ENCODE measurements at regions of chr3 and their contacts with region 1.

Region 1: GRCh38 chr3:9986237-9986725 is 360 bp downstream of the EMC3 start:
- DNase-seq: no peak
- ATAC-seq: peak; percentile 28
- H3K4me3 Mint-ChIP-seq: peak overlapping the region; percentile 98
- H3K27ac Mint-ChIP-seq: peak overlapping the region; percentile 100
- H3K4me1 Mint-ChIP-seq: peaks cover 24% of the 10 kb centered on the region
- H3K27me3 Mint-ChIP-seq: no peaks in the 10 kb centered on the region
- CTCF ChIP-seq: no peak

Region 2: DNA sequence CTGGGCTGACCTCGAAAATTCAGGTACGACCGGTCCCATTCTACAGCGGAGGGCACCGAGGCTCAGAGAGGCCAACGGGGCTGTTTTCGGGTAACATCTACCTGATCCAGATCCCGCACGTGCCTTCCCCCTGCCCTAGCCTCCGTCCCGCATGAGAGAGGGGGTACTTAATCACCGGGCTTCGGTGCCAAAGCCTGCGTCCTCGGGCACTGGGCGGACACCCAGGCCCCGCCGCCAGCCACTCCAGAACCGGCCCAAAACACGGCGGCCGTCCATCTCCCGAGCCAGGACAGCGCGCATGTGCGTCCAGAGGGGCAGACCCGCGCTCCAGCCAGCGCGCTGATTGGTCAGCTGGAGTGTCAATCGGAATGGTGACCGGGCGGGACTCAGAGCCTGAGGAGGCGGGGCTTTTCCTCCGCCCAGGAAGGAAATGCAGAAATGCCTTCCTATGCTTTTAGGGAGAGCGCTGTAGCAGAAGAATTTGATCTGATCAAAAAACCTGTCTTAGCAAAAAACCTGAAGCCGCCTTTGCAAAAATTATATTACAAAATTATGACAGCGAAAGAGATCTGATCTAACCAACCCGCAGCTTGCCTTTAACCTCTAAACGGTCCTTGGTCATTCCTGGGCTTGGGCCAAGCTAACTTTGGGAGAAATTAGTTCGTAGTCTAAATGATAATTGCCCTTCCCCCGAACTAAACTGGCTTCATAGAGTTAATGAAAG is 142.4 kb before region 1 on chr3 and contains the start of gene RPUSD3:
- CTCF ChIA-PET with region 1: no interaction called
- POLR2A ChIA-PET with region 1: no interaction called
- intact Hi-C with region 1: loop called (anchors 2 kb)
- DNase-seq: peak; percentile 95
- ATAC-seq: peak; percentile 100
- H3K4me3 Mint-ChIP-seq: peak within 1 kb of the TSS; percentile 98
- H3K27ac Mint-ChIP-seq: peak within 1 kb of the TSS; percentile 86
- H3K4me1 Mint-ChIP-seq: peaks cover 20% of the 10 kb centered on the region
- H3K27me3 Mint-ChIP-seq: no peaks in the 10 kb centered on the region
- CTCF ChIP-seq: no peak
- total RNA-seq, gene RPUSD3: 49.5 and 55.7 TPM in 2 replicates

Region 3: DNA sequence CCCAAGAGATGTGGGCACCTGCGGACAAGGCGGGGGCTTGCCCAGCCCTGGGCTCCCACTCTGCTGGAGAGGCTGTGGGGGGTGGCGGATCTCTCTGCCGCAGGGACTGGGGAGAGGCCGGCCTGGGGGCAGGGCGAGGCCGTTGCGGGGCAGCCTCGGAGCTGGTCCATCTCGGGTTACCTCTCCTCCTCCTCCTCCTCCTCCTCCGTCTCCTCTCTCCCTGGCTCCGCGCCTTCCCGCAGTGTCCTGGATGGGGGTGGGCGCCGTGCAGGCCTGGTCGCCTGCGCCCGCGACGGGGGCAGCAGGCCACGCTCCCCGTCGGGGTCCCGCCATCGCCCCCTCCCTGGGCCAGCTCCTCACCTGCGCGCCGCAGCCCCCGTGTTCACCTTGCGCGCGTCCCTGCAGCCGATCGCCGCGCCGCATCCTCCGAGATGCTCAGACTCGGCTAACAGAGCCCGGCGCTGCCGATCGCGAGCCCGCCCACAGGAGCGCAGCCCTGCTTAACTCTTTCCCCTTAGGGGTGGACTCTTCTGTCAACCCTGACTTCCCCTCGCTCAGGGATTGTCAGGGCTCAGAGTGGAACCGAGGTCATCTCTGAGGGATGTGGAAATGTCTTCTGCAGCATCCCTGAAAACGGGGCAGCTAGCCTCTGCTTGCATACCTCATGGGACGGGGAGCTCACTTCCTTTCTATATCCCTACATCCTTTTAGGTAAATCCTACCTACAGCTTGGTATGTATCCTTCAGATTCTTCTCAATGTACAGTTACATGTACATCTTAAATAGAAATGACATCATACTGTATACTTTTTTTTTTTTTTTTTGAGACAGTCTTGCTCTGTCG is 34.1 kb before region 1 on chr3 and contains the start of gene PRRT3:
- CTCF ChIA-PET with region 1: interaction called, 4 read pairs
- POLR2A ChIA-PET with region 1: interaction called, 4 read pairs
- intact Hi-C with region 1: loop called (anchors 1 kb)
- DNase-seq: peak; percentile 41
- ATAC-seq: peak; percentile 90
- H3K4me3 Mint-ChIP-seq: peak within 1 kb of the TSS; percentile 85
- H3K27ac Mint-ChIP-seq: no peak within 1 kb of the TSS
- H3K4me1 Mint-ChIP-seq: peaks cover 15% of the 10 kb centered on the region
- H3K27me3 Mint-ChIP-seq: no peaks in the 10 kb centered on the region
- CTCF ChIP-seq: no peak
- total RNA-seq, gene PRRT3: 4.2 and 4.3 TPM in 2 replicates

Region 4: GRCh38 chr3:10004960-10005564 is 18.8 kb after region 1 on chr3:
- CTCF ChIA-PET with region 1: no interaction called
- POLR2A ChIA-PET with region 1: no interaction called
- intact Hi-C with region 1: no loop called
- DNase-seq: no peak
- ATAC-seq: no peak
- H3K4me3 Mint-ChIP-seq: no peak overlapping the region
- H3K27ac Mint-ChIP-seq: no peak overlapping the region
- H3K4me1 Mint-ChIP-seq: peaks cover 13% of the 10 kb centered on the region
- H3K27me3 Mint-ChIP-seq: no peaks in the 10 kb centered on the region
- CTCF ChIP-seq: no peak

Region 5: DNA sequence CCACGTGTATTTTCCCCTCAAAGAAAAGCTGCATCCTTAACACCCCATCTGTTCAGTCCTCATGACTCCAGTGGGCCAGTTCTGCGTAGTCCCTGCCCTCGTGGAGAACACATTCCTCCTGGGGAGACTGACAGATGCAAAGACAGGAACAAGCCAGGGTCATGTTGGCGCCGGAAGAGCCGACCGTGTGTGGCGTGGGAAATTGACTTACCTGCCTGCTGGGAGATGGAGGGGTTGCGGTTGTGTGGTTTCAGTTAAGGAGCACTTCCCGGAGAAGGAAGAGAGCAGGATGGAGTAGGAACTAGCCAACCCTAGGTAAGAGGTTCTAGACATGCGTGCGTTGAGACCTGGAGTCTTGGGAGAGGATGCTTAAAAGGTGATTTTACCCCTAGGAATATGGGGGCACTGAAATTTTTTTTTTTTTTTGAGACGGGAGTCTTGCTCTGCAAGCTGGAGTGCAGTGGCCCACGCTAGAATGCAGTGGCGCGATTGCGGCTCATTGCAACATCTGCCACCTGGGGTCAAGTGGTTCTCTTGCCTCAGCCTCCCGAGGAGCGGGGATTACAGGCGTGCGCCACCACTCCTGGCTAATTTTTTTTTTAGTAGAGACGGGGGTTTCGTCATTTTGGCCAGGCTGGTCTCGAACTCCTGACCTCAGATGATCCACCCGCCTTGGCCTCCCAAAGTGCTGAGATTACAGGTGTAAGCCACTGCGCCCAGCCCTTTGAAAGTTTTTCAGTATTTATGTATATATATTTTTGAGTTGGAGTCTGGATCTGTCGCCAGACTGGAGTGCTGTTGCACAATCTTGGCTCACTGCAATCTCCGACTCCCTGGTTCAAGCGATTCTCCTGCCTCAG is 156.7 kb after region 1 on chr3:
- CTCF ChIA-PET with region 1: no interaction called
- POLR2A ChIA-PET with region 1: interaction called, 6 read pairs
- intact Hi-C with region 1: loop called (anchors 10 kb)
- DNase-seq: no peak
- ATAC-seq: no peak
- H3K4me3 Mint-ChIP-seq: peak overlapping the region; percentile 97
- H3K27ac Mint-ChIP-seq: peak overlapping the region; percentile 95
- H3K4me1 Mint-ChIP-seq: peaks cover 42% of the 10 kb centered on the region
- H3K27me3 Mint-ChIP-seq: no peaks in the 10 kb centered on the region
- CTCF ChIP-seq: no peak

Region 6: GRCh38 chr3:10334459-10334858 is 348.2 kb after region 1 on chr3:
- CTCF ChIA-PET with region 1: no interaction called
- POLR2A ChIA-PET with region 1: no interaction called
- intact Hi-C with region 1: no loop called
- DNase-seq: no peak
- ATAC-seq: no peak
- H3K4me3 Mint-ChIP-seq: no peak overlapping the region
- H3K27ac Mint-ChIP-seq: no peak overlapping the region
- H3K4me1 Mint-ChIP-seq: peaks cover 25% of the 10 kb centered on the region
- H3K27me3 Mint-ChIP-seq: peaks cover 2% of the 10 kb centered on the region
- CTCF ChIP-seq: no peak

Region 7: GRCh38 chr3:10408680-10409079 is 422.4 kb after region 1 on chr3:
- CTCF ChIA-PET with region 1: no interaction called
- POLR2A ChIA-PET with region 1: no interaction called
- intact Hi-C with region 1: no loop called
- DNase-seq: no peak
- ATAC-seq: no peak
- H3K4me3 Mint-ChIP-seq: no peak overlapping the region
- H3K27ac Mint-ChIP-seq: no peak overlapping the region
- H3K4me1 Mint-ChIP-seq: no peaks in the 10 kb centered on the region
- H3K27me3 Mint-ChIP-seq: no peaks in the 10 kb centered on the region
- CTCF ChIP-seq: no peak

Region 8: DNA sequence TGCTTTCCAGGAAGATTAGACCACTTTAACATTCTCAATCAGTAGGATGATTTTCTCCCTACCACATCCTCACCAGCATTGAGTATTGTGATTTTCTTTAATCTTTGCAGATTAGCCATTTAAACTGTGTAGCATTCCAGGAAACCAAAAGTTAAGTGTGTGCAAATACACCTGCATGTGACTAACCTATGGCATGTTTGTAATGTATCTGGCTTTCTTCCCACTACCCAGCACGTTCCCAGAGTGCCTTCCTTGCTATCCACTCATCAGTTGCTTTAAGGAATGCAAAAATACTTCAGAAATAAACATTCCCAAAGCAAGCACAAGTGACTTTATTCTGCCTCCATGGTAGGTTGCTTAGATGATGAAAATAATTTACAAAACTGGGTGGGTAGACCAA is 1360.1 kb after region 1 on chr3:
- CTCF ChIA-PET with region 1: no interaction called
- POLR2A ChIA-PET with region 1: no interaction called
- intact Hi-C with region 1: no loop called
- DNase-seq: no peak
- ATAC-seq: no peak
- H3K4me3 Mint-ChIP-seq: no peak overlapping the region
- H3K27ac Mint-ChIP-seq: no peak overlapping the region
- H3K4me1 Mint-ChIP-seq: no peaks in the 10 kb centered on the region
- H3K27me3 Mint-ChIP-seq: no peaks in the 10 kb centered on the region
- CTCF ChIP-seq: no peak